ENCODE measurements at regions of chr12 and their contacts with region 1.

Region 1: GRCh38 chr12:54379401-54380201 is 4.9 kb downstream of the ZNF385A start:
- DNase-seq: peak; percentile 94

Region 2: GRCh38 chr12:54368709-54369583 is 10.7 kb before region 1 on chr12:
- CTCF ChIA-PET with region 1: interaction called, 38 read pairs
- POLR2A ChIA-PET with region 1: interaction called, 4 read pairs
- DNase-seq: peak; percentile 76

Region 3: GRCh38 chr12:54390668-54391551 is 11.3 kb after region 1 on chr12:
- CTCF ChIA-PET with region 1: interaction called, 16 read pairs
- POLR2A ChIA-PET with region 1: interaction called, 5 read pairs
- DNase-seq: peak; percentile 74

Region 4: DNA sequence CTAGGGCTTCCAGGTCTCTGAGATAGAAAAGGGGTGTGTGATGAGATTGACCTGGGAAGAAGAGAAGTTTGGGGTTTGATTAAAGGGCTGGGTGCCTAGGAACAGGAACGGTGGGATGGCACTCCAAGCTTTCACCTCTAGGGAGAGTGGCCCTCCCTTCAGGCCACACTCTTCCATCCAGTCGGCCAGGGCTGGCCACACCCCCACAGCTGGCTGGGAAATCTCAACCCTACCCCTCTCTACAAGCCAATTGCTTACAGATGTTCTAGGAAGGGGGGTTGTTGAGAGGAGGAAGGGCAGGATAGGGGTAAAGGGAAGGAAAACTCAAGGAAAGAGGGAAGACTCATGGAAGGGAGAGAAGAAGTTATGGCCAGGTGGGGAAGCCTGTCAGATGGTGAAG is 46.1 kb after region 1 on chr12:
- CTCF ChIA-PET with region 1: no interaction called
- POLR2A ChIA-PET with region 1: no interaction called
- DNase-seq: no peak

Measured in HEK293T (cell line).